IMR-90 (cell line): ENCODE measurements at regions of chr17 and their contacts with region 1.

Region 1: DNA sequence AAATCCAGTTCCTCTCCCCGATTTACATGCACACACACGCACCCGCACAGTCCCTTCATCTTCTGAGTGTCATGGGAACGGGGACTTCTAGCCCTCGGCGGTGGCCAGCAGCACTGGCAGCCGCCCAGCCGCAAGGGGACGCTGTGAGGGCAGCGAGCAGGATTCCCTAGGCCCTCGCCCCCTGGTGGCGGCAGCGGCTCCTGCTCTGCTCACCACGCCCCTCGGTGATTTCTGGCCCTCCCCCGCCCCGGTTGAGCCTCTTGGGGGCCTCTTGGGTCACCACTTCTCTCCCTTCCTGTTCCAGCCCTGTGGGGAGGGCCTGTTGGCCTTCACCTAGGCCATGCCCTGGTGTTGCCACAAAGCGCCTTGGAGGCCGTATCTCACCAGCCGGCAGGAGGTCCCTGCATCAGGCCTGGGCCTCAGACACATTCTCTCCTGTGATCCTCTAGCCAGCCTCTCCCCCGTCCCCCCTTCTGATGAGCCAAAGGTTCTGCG is 75.2 kb upstream of the KSR1 start:
- DNase-seq: peak; percentile 20
- ATAC-seq: peak; percentile 28; the same call in 1 of the 2 replicates
- H3K4me3 ChIP-seq: no peak overlapping the region
- H3K27ac ChIP-seq: no peak overlapping the region
- H3K4me1 ChIP-seq: peaks cover 18% of the 10 kb centered on the region
- H3K27me3 ChIP-seq: no peaks in the 10 kb centered on the region
- CTCF ChIP-seq: peak; percentile 87
- POLR2A ChIP-seq: no peak
- RAD21 ChIP-seq: peak; percentile 50

Region 2: DNA sequence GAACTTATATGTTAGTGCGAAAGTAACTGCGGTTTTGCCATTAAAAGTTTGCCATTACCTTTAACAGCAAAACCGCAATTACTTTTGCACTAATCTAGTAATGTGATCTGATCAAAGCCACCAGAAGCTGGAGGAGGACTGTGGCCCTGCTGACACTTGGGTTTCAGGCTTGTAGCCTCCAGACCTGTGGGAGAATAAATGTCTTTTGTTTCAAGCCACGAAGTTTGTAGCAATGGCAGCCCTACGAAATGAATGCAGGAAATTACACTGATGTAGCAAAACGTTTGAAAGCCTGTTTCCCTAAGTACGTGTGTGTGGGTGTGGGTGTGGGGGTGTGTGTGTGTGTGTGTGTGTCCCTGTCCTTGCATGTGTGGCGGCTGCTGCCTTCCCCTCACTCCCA is 20.5 kb before region 1 on chr17:
- CTCF ChIA-PET with region 1: interaction called, 3 read pairs
- POLR2A ChIA-PET with region 1: no interaction called
- dilution Hi-C with region 1: no loop called
- in situ Hi-C with region 1: no loop called
- intact Hi-C with region 1: loop called (anchors 2 kb)
- DNase-seq: no peak
- ATAC-seq: no peak
- H3K4me3 ChIP-seq: no peak overlapping the region
- H3K27ac ChIP-seq: no peak overlapping the region
- H3K4me1 ChIP-seq: peaks cover 11% of the 10 kb centered on the region
- H3K27me3 ChIP-seq: no peaks in the 10 kb centered on the region
- CTCF ChIP-seq: no peak
- POLR2A ChIP-seq: no peak
- RAD21 ChIP-seq: no peak

Region 3: DNA sequence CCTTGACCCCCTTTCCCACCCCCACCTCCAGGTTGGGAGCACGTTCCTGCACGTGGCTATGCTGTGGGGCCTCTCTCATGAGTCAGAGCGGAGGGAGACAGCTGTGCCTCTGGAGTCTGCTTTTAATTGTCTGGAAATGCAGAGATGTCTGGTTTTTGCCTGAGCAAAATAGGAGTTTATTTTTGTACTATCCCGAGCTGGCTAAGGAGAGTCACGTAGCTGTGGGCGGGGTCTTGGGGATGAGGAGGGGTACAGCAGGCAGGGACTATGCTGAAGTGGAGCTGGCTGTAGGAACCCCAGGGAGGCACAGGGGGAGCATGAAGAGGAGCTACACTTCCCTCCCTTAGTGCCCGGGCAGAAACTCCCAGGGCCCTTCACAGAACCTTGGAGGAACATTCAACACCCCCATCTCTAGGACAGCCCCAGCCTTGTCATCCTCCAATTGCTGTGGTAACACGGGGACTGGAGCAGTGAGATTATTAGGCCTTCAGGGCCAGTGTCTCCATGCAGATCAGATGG is 205.2 kb after region 1 on chr17:
- CTCF ChIA-PET with region 1: no interaction called
- POLR2A ChIA-PET with region 1: no interaction called
- dilution Hi-C with region 1: no loop called
- in situ Hi-C with region 1: no loop called
- intact Hi-C with region 1: no loop called
- DNase-seq: peak; percentile 87
- ATAC-seq: peak; percentile 86
- H3K4me3 ChIP-seq: no peak overlapping the region
- H3K27ac ChIP-seq: peak overlapping the region; percentile 73
- H3K4me1 ChIP-seq: peaks cover 17% of the 10 kb centered on the region
- H3K27me3 ChIP-seq: no peaks in the 10 kb centered on the region
- CTCF ChIP-seq: peak; percentile 21; the same call in 1 of the 2 replicates
- POLR2A ChIP-seq: peak; percentile 45; the same call in 1 of the 2 replicates
- RAD21 ChIP-seq: peak; percentile 1; the same call in 1 of the 2 replicates